ENCODE measurements at regions of chr13 and their contacts with region 1.

Region 1: GRCh38 chr13:48892053-48892690 is 83.5 kb upstream of the FNDC3A start:
- DNase-seq: no peak
- H3K4me3 Mint-ChIP-seq: peak overlapping the region; percentile 20
- H3K27ac Mint-ChIP-seq: peak overlapping the region; percentile 70
- H3K4me1 Mint-ChIP-seq: peaks cover 19% of the 10 kb centered on the region
- H3K27me3 Mint-ChIP-seq: no peaks in the 10 kb centered on the region

Region 2: DNA sequence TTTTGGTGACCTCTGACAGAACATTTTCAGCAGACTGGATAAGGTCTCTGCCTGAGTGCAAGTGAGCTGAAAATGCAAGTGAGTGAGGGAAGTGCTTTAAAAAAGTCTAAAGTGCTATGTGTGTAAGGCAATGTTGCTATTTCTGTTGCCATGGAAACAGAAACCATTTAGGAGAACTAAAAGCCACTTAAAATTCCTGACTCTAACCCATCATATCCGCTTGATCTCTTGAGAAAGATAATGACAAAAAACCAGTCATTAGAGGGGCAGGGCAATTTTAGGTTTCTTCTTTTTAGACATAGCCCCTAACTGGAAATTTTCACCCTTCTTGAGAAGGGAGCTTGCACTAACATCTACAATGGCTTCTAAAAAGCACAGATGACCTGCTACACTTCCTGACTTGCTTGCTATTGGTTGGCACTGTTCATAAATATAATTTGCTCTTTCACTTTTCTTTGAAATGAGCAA is 238.7 kb before region 1 on chr13 and contains the start of gene CYSLTR2:
- intact Hi-C with region 1: loop called (anchors 5 kb)
- DNase-seq: peak; percentile 84
- H3K4me3 Mint-ChIP-seq: peak within 1 kb of the TSS; percentile 88
- H3K27ac Mint-ChIP-seq: peak within 1 kb of the TSS; percentile 88
- H3K4me1 Mint-ChIP-seq: peaks cover 23% of the 10 kb centered on the region
- H3K27me3 Mint-ChIP-seq: no peaks in the 10 kb centered on the region
- total RNA-seq, gene CYSLTR2: 0.90 and 1.1 TPM in 2 replicates

Region 3: DNA sequence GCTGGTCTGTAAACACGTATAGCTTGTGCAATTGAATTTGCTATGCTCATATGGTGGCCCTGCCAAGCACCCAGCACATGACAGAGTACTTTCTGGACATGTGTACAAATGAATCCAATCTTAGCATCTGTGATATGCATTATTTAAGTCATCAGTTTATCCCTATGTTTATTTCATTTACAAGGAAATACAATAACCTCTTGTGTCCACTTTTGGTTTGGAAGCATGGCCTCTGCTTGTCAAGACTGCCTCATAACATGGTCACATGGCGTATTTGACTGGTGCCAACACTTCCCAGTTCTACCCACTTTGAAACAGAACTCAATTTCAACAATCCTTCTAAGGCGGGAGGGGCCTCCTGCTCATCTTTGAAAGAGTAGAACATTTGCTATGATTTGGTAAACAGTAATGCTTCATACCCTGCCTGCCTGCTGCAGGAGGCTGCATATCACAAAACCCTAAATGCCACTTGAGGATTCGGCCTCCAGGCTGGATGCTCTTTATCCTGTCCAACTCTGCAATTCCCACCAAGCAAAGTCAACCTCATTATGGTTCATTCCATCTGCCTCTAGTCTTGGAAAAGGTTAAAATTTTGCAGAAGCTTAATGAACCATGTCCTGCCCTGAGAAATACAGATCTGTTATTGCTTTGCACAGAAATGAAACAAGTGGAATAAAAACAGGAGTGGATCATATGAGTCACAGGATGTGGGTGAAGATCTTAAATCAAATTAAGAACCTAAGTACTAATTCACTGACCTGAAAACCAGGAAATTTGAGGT is 87.2 kb before region 1 on chr13:
- intact Hi-C with region 1: loop called (anchors 1 kb)
- DNase-seq: peak; percentile 61
- H3K4me3 Mint-ChIP-seq: peak overlapping the region; percentile 49
- H3K27ac Mint-ChIP-seq: peak overlapping the region; percentile 55
- H3K4me1 Mint-ChIP-seq: peaks cover 21% of the 10 kb centered on the region
- H3K27me3 Mint-ChIP-seq: no peaks in the 10 kb centered on the region

Region 4: DNA sequence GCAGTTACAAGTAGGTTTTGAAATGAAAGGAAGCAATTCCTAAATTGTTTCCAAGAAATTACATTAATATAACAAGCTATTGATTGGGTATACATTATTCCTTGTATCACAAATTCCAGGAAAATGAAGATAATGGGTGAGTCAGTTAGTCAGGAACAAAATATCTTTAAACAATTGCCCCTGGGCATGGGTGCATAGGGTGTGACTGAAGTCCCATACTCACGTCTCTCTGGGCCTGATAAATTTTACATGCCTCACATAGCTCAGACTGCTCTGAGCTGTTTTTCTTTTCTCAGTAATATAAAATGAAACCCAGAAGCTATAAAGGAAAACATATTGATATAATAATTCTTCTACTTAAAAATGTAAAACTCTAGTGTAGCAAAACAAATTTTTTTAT is 171.3 kb after region 1 on chr13:
- intact Hi-C with region 1: no loop called
- DNase-seq: no peak
- H3K4me3 Mint-ChIP-seq: no peak overlapping the region
- H3K27ac Mint-ChIP-seq: no peak overlapping the region
- H3K4me1 Mint-ChIP-seq: peaks cover 5% of the 10 kb centered on the region
- H3K27me3 Mint-ChIP-seq: no peaks in the 10 kb centered on the region

Region 5: DNA sequence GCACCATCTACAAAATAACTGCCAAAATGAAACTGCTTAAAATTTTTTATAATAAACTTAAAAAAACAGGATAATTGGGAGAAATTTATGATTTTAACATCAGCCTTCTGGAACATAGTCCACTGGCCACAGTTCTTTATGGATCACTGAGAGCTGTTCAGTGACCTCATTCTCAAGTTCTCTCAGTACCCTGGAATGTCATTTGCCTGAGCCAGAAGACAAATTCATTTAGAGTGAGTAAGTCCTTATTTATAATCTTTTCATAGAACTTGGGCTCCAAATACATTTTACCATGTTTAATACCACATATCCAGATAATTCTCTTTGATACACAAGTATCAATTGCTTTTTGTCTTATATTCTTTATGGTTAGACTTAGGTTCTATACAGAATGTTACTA is 464.1 kb after region 1 on chr13:
- intact Hi-C with region 1: no loop called
- DNase-seq: no peak
- H3K4me3 Mint-ChIP-seq: no peak overlapping the region
- H3K27ac Mint-ChIP-seq: no peak overlapping the region
- H3K4me1 Mint-ChIP-seq: no peaks in the 10 kb centered on the region
- H3K27me3 Mint-ChIP-seq: peaks cover 2% of the 10 kb centered on the region

Region 6: DNA sequence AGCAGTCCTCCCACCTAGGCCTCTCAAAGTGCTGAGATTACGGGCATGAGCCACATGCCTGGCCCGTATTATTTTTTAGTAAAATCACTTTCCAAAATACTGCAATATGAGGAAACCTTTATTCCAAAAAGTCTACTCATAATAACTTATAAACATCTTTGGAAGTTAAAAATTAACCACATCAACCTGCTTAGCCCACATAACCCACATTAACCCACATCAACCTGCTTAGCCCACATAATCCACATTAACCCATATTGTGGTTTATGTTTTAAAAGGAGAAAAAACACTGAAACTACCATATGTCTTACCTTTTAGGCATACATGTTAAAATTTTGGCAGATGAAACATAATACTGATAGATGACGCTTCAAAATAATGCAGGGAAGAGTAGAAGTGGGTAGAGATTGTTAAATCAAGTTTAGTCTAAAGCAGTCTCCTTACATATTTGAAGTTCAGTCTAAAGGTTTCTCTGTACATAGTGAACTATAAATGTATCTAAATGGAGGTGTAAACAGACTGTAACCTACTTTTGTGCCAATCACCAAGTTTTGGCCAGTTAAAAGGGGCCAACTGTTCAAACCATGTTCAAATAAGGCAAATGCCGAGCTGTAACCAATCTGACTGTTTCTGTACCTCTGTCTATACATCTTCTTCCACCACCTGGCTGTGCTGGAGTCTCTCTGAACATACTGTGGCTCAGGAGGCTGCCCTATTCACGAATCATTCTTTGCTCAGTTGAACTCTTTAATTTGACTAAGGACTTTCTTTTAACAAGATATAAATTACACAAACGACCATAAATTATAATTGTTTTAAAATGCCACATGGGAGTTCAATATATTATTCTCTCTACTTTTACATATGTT is 885.8 kb after region 1 on chr13:
- intact Hi-C with region 1: no loop called
- DNase-seq: peak; percentile 57
- H3K4me3 Mint-ChIP-seq: no peak overlapping the region
- H3K27ac Mint-ChIP-seq: no peak overlapping the region
- H3K4me1 Mint-ChIP-seq: peaks cover 18% of the 10 kb centered on the region
- H3K27me3 Mint-ChIP-seq: no peaks in the 10 kb centered on the region